ENCODE measurements at regions of chr4 and their contacts with region 1.

Region 1: GRCh38 chr4:121252224-121252806 is 88.2 kb upstream of the TNIP3 start:
- DNase-seq: peak; percentile 68
- H3K4me3 Mint-ChIP-seq: no peak overlapping the region
- H3K27ac Mint-ChIP-seq: no peak overlapping the region
- H3K4me1 Mint-ChIP-seq: peaks cover 70% of the 10 kb centered on the region
- H3K27me3 Mint-ChIP-seq: no peaks in the 10 kb centered on the region

Region 2: GRCh38 chr4:120843849-120844527 is 408.3 kb before region 1 on chr4:
- CTCF ChIA-PET with region 1: no interaction called
- POLR2A ChIA-PET with region 1: no interaction called
- intact Hi-C with region 1: loop called (anchors 1 kb)
- DNase-seq: peak; percentile 17
- H3K4me3 Mint-ChIP-seq: no peak overlapping the region
- H3K27ac Mint-ChIP-seq: no peak overlapping the region
- H3K4me1 Mint-ChIP-seq: peaks cover 16% of the 10 kb centered on the region
- H3K27me3 Mint-ChIP-seq: no peaks in the 10 kb centered on the region

Region 3: DNA sequence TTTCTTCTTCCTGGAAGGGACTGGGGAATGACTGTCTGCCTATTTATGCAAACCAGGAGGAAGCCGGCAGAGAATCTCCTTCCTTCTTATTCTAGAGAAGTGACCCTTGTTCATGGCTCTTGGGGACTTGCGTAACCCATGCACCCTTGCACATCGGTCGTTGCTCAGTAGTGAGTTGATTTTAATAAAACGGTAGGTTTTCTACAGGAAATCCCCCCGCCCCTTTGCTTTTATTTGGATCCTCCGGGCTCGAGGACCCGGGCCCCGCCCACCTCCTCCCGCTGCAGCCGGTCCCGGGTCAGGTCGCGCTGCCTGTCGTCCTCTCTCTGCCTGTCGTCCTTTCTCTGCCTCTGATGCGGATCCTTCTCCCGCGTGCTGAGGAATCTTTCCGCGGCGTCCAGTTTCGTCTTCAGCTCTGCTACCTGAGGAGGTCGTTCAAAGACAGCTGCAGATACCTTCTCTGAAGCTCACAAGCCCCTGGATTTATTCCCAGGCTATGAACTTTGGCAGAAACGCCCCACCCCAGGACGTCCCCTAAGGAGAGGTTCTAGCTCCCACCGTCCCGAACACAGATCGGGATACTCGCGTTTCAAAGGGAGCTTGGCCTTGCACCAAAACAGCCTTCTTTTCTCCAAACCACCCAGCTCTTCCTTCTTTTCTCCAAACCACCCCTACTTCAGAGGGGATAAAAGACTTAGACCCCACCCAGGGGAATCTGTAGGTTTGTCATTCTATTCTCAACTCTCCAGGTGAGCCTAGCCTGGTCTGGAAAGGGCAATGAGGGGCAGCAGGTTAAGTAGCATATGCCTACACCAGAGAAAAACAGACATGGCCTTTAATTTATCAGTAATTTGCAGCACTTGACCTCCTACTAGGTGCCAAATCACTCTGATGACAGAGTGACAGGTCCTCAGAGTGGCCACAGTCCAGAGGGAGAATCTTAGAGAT is 95.2 kb before region 1 on chr4:
- CTCF ChIA-PET with region 1: interaction called, 3 read pairs
- POLR2A ChIA-PET with region 1: no interaction called
- intact Hi-C with region 1: loop called (anchors 1 kb)
- DNase-seq: peak; percentile 21
- H3K4me3 Mint-ChIP-seq: peak overlapping the region; percentile 68
- H3K27ac Mint-ChIP-seq: peak overlapping the region; percentile 20
- H3K4me1 Mint-ChIP-seq: peaks cover 42% of the 10 kb centered on the region
- H3K27me3 Mint-ChIP-seq: peaks cover 12% of the 10 kb centered on the region

Region 4: GRCh38 chr4:121199742-121200561 is 52.4 kb before region 1 on chr4:
- CTCF ChIA-PET with region 1: interaction called, 3 read pairs
- POLR2A ChIA-PET with region 1: no interaction called
- intact Hi-C with region 1: loop called (anchors 1 kb)
- DNase-seq: peak; percentile 66
- H3K4me3 Mint-ChIP-seq: peak overlapping the region; percentile 10
- H3K27ac Mint-ChIP-seq: peak overlapping the region; percentile 60
- H3K4me1 Mint-ChIP-seq: peaks cover 34% of the 10 kb centered on the region
- H3K27me3 Mint-ChIP-seq: no peaks in the 10 kb centered on the region

Region 5: GRCh38 chr4:121272526-121272925 is 20.2 kb after region 1 on chr4:
- CTCF ChIA-PET with region 1: interaction called, 19 read pairs
- POLR2A ChIA-PET with region 1: interaction called, 5 read pairs
- intact Hi-C with region 1: loop called (anchors 1 kb)
- DNase-seq: no peak
- H3K4me3 Mint-ChIP-seq: no peak overlapping the region
- H3K27ac Mint-ChIP-seq: peak overlapping the region; percentile 56
- H3K4me1 Mint-ChIP-seq: peaks cover 16% of the 10 kb centered on the region
- H3K27me3 Mint-ChIP-seq: peaks cover 7% of the 10 kb centered on the region

Region 6: GRCh38 chr4:121307445-121308327 is 55.4 kb after region 1 on chr4:
- CTCF ChIA-PET with region 1: interaction called, 20 read pairs
- POLR2A ChIA-PET with region 1: no interaction called
- intact Hi-C with region 1: loop called (anchors 1 kb)
- DNase-seq: peak; percentile 58
- H3K4me3 Mint-ChIP-seq: peak overlapping the region; percentile 7
- H3K27ac Mint-ChIP-seq: peak overlapping the region; percentile 75
- H3K4me1 Mint-ChIP-seq: peaks cover 18% of the 10 kb centered on the region
- H3K27me3 Mint-ChIP-seq: no peaks in the 10 kb centered on the region